Dendritic cell treated with granulocyte-macrophage colony-stimulating factor and Interleukin-4, amounts not matched to agents 40 ng/mL and 50 ng/mL, for 4 days (primary cell): ENCODE measurements at regions of chr16 and their contacts with region 1.

Region 1: DNA sequence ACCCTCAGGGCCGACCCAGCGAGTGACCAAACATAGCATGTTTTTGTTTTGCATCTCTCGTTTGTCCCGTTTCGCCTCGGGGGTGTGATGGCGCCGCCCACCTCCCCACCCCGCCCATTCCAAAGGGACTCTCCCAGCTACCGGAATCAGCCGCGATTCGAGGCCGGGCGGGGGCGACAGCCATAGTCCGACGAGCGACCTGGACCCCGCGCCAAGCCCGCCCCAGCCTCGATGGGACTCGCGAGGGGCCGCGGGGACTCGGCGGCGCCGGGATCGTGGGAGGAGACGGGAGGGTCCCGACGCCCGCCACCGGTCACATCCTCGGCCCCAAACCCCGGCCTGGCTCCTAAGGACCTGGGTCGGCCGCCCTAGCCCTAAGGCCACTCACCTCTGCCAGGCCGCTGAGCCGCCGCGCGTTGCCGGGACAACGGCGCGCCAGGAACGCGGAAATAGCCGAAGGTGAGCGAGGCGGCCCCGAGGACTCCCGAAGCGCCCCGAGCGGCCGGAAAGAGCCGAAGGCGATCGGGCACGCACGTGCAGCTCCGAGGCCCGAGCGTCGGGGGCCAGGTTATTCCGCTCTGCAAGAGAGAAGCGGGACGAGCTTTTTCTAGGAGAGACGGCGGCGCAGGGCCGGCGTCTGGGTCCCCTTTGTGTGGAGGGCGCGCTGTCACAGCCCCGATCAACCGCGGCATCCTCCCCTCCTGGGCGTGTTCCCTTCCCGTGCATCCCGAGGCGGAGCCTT is 1.4 kb downstream of the IFT140 start:
- H3K4me3 Mint-ChIP-seq: peak overlapping the region; percentile 84
- H3K27ac Mint-ChIP-seq: peak overlapping the region; percentile 95
- H3K4me1 Mint-ChIP-seq: peaks cover 37% of the 10 kb centered on the region
- H3K27me3 Mint-ChIP-seq: peaks cover 19% of the 10 kb centered on the region

Region 2: GRCh38 chr16:1428511-1428910 is 181.9 kb before region 1 on chr16:
- intact Hi-C with region 1: loop called (anchors 10 kb)
- H3K4me3 Mint-ChIP-seq: peak overlapping the region; percentile 48
- H3K27ac Mint-ChIP-seq: peak overlapping the region; percentile 70
- H3K4me1 Mint-ChIP-seq: no peaks in the 10 kb centered on the region
- H3K27me3 Mint-ChIP-seq: peaks cover 27% of the 10 kb centered on the region